ENCODE measurements at regions of chr3 and their contacts with region 1.

Region 1: DNA sequence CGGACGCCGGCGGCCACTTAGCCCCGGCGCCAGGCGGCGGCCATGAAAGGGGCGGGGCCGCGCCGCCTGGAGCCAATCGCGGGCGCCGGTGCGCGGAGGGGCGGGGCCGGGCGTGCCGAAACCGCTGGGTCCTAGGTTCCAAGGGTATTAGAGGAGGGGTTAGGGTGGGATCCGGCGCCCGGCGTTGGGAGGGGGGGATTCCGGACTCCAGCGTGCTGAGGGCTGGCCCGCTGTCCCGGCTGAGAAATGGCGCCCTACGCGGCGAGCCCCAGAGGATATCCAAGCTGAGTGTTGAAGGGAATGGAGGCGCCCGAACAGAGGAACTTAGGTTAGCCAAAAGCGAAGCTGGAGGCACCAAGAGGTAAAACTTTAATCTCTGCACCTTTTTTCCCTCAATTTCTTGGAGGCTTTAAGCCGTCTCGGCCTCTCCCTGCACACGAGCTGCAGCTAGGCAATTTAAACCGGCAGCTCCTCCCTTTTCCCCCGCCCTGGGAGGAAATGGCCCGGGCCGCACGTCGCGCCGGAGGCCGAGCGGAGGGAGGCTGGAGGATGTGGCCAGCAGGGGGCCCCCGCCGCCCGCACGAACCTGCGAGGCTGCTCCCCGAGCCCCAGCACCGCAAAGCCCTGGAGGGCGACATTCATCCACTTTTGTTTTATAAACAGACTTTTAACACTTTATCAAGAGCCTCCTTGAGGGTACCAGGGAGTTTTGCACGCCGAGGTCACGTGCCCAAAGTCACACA is at the start of gene XXYLT1:
- DNase-seq: peak; percentile 88 to 96
- H3K4me3 ChIP-seq: peak within 1 kb of the TSS; percentile 56
- H3K4me1 ChIP-seq: peaks cover 11% of the 10 kb centered on the region
- H3K27me3 ChIP-seq: no peaks in the 10 kb centered on the region

Region 2: DNA sequence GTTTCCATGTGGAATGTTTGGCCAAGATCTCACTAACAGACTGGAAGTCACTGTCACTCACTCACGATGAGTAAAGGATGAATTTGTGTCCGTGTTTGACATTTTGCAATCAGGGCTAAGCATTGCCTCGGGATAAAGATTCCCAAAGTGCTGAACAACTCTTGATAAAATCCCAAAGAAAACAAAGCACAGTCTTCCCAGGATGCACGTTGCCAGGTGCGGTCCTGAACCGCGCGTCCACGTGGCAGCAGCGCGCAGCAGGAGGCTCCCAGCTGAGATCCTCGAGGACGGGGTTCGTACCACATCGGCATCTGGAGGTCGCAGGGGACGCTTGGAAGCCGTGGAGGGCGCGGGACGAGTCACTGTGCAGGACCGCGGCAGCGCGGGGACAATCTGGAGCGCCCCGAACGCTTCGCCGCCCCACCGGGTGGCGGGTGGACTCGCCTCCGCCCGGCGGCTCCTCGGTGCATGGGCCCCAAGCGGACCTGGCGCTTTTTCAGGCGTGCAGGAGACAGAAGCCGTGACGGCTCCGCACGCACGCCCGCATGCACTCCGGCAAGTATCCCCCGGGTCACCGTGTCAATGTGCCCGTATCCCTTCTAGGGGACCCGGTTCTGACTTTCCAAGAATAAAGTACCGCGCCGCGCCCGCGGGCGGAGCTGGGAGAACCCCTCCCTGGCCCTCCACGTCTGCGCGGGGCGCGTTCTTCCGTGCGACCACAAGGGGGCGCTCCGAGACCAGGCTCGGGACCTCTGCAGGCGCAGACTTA is 937.9 kb before region 1 on chr3:
- in situ Hi-C with region 1: loop called (anchors 25 kb)
- DNase-seq: peak; percentile 80 to 94
- H3K4me3 ChIP-seq: peak overlapping the region; percentile 43
- H3K4me1 ChIP-seq: no peaks in the 10 kb centered on the region
- H3K27me3 ChIP-seq: no peaks in the 10 kb centered on the region

Region 3: DNA sequence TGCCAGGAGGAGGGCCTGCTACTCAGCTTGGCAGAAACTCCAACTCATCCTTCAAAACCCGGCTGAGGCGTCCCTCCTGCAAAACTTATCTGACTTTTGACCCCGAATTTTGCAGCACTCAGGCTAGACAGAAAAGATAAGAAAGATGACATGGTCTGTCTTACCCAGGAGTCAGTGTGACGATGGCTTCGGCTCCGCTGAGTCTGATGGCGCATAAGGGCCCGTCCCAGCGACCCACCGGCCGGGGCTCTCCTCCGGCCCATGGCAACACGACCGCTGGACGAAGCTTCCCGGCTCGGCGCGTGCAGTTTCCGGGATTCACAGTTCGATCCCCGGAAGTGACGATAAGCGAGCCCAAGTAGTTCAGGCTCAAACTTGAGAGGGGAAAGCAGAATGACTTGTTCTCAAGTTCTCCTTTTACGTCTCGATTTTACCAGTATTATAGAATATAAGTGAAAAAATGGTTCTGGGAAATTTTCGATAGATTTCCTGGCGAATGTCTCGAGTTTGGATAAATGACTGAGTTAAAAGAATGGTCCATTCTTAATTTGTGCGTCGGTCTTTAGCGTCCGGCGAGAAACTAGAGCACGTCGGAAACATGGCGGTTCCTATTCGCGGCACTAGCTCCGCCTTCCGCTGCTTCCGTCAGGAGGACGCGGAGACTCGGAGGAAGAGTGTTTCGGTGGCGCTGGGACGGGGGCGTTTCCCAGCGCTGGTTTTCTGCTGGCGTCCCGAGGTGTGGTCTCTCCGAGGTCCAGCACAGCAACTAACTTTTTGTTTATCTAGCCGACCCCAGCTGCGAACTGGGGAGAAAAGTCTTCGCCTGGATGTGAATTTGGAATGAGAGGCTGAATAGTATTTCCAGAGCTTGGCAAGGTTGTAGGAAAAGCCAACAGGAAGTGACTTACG is 599.1 kb before region 1 on chr3 and contains the start of gene LSG1:
- in situ Hi-C with region 1: loop called (anchors 5 kb)
- DNase-seq: peak; percentile 92 to 93
- H3K4me3 ChIP-seq: peak within 1 kb of the TSS; percentile 67
- H3K4me1 ChIP-seq: peaks cover 20% of the 10 kb centered on the region
- H3K27me3 ChIP-seq: peaks cover 6% of the 10 kb centered on the region; the same call in 1 of the 2 replicates

Region 4: GRCh38 chr3:194711913-194712312 is 559.4 kb before region 1 on chr3:
- in situ Hi-C with region 1: no loop called
- DNase-seq: no peak
- H3K4me3 ChIP-seq: no peak overlapping the region
- H3K4me1 ChIP-seq: peaks cover 5% of the 10 kb centered on the region
- H3K27me3 ChIP-seq: no peaks in the 10 kb centered on the region

Region 5: DNA sequence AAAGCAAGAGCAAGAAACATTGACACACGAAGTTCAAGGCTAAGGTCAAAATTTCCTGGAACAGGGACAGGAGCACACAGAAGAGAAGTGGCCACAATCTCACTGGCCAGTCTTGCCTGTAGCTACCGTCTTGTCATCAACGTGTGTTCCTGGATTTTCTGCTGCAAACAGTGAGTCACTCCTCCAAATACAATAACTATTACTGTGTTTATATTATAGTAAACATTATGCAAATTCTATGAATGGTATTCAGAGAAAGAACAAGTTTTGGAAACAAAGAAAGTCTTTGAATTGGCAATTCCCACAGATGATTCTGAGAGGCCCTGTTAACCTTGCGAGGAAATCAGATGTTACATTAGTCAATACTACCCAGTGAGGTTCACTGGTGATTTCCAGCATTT is 365.1 kb before region 1 on chr3:
- in situ Hi-C with region 1: no loop called
- DNase-seq: peak in 1 of 2 experiments; percentile 4
- H3K4me3 ChIP-seq: no peak overlapping the region
- H3K4me1 ChIP-seq: no peaks in the 10 kb centered on the region
- H3K27me3 ChIP-seq: no peaks in the 10 kb centered on the region

Region 6: DNA sequence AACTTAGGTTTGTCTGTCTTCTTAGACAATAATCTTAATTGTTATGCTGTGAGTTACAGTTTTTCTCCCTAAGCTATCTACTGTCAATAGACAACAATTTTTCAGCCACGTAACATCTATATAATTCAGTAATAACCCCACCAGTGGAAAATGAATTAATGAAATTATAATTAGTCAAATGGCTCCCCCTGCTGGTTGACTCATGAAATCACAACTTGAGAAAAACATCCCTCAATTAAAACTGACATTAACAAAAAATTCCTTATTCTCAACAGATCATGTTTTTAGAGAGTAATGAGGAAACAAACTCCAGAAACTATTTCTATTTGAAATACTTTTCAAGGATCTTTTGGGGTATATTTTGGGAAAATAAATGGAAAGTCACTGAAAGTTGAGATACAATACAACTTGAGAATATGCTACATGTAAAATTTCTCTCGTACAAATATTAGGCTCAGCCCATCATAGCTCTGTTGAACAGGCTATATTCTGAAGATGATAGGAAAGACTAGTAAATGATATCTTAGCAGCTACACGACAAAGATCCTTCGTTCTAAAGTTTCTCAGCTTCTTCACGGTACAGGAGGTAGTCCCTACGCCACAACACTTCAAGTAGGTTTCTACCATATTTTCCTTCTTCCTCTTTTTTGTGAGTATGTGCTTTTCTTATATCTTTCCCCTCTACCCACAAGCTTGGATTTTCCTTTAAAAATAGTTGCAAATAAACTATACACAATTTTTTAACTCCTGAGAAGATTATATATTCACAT is 251.2 kb after region 1 on chr3:
- in situ Hi-C with region 1: loop called (anchors 5 kb)
- DNase-seq: peak; percentile 30 to 36
- H3K4me3 ChIP-seq: no peak overlapping the region
- H3K4me1 ChIP-seq: no peaks in the 10 kb centered on the region
- H3K27me3 ChIP-seq: no peaks in the 10 kb centered on the region

Region 7: GRCh38 chr3:195803289-195803950 is 532.1 kb after region 1 on chr3:
- in situ Hi-C with region 1: no loop called
- DNase-seq: no peak
- H3K4me3 ChIP-seq: no peak overlapping the region
- H3K4me1 ChIP-seq: peaks cover 11% of the 10 kb centered on the region
- H3K27me3 ChIP-seq: 0 out of 2 replicates have a peak, but pooled peaks cover 3% of the 10 kb centered on the region

Region 8: DNA sequence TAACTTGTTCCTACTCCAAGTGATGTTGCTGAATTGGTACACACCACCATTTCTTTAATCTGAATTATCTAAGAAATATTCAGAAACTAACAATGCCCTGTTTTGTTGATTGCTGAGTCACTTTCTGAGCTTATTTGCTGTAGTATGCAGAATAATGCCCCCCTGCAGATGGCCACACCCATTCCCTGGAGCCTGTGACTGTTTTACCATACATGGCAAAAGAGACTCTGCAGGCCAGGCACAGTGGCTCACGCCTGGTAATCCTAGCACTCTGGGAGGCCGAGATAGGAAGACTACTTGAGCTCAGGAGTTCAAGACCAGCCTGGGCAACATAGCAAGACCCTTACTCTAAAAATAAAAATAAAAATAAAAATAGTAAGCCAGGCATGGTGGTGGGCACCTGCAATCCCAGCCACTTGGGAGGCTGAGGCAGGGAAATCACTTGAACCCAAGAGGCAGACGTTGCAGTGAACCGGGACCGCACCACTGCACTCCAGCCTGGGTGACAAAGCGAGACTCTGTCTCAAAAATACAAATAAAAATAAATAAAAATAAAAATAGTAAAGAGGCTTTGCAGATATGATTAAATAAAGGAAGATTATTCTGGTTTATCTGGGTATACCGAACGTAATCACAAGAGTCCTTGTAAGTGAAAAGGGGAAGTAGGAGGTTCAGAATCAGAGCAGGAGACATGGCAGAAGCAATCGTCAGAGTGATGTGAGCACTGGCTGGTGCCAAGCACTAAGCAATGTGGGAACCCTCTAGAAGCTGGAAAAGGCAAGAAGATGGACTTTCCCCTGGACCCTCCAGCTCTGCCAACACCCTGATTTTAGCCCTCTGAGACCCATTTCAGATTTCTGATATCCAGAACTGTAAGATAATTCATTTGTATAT is 997.2 kb after region 1 on chr3:
- in situ Hi-C with region 1: no loop called
- DNase-seq: peak in 1 of 2 experiments; percentile 52
- H3K4me3 ChIP-seq: no peak overlapping the region
- H3K4me1 ChIP-seq: peaks cover 8% of the 10 kb centered on the region
- H3K27me3 ChIP-seq: no peaks in the 10 kb centered on the region

Measured in HAP-1 (cell line).